ENCODE measurements at regions of chr3 and their contacts with region 1.

Region 1: GRCh38 chr3:71489315-71489761 is 94.2 kb downstream of the FOXP1 start:
- DNase-seq: peak; percentile 35
- H3K4me3 Mint-ChIP-seq: peak overlapping the region; percentile 67
- H3K27ac Mint-ChIP-seq: peak overlapping the region; percentile 88
- H3K4me1 Mint-ChIP-seq: peaks cover 88% of the 10 kb centered on the region
- H3K27me3 Mint-ChIP-seq: no peaks in the 10 kb centered on the region

Region 2: DNA sequence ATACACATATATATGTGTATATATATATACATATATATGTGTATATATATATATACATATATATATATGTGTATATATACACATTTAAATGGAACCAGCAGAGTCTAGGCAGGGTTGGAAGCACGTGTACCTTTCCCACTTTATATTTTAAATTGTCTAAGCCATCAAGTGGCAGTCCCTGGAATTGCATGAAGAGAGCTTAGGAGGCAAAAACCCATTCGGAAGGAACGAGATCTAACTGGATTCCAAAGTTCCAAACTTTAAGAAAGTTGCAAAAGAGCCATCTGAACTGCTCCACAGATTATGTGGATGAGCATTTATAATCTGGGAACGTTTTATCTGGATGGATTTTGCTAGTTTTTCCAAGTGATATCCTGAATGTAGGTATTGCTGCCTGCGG is 92.3 kb before region 1 on chr3:
- CTCF ChIA-PET with region 1: interaction called, 6 read pairs
- intact Hi-C with region 1: loop called (anchors 1 kb)
- DNase-seq: peak; percentile 35
- H3K4me3 Mint-ChIP-seq: peak overlapping the region; percentile 5
- H3K27ac Mint-ChIP-seq: no peak overlapping the region
- H3K4me1 Mint-ChIP-seq: peaks cover 81% of the 10 kb centered on the region
- H3K27me3 Mint-ChIP-seq: no peaks in the 10 kb centered on the region

Region 3: GRCh38 chr3:71456156-71456555 is 33.2 kb before region 1 on chr3:
- CTCF ChIA-PET with region 1: interaction called, 4 read pairs
- intact Hi-C with region 1: loop called (anchors 1 kb)
- DNase-seq: no peak
- H3K4me3 Mint-ChIP-seq: peak overlapping the region; percentile 77
- H3K27ac Mint-ChIP-seq: peak overlapping the region; percentile 93
- H3K4me1 Mint-ChIP-seq: peaks cover 88% of the 10 kb centered on the region
- H3K27me3 Mint-ChIP-seq: no peaks in the 10 kb centered on the region

Region 4: DNA sequence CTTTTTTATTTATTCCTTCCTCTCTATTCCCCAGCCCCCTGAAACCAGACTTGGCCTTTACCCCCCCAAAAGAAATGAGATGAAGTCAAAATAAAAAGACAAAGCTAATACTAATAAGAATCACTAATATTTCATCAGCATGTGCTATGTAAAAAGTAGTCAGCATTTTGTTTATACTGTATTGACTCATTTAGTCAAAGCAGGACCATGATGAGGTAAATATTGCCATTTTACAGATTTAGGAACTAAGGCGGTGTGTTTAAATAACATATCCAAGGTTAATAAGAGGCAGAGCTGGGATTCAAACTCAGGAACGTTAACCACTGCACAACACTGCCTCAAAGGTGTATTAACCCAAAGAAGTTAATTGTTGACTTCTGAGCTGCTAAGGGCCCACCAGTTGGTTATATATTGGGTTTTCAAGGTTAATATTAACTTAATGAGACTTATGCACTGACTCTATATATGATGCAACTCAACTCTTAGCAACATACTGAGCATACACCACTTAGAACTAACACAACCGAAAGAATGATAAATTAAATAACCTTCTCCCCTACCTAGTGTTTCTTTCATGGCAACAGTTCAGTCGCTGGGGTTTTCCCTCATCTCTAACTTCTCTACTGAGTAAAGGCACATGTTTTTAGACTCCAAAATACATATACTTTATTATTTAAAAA is 59.5 kb after region 1 on chr3:
- CTCF ChIA-PET with region 1: no interaction called
- intact Hi-C with region 1: no loop called
- DNase-seq: no peak
- H3K4me3 Mint-ChIP-seq: no peak overlapping the region
- H3K27ac Mint-ChIP-seq: no peak overlapping the region
- H3K4me1 Mint-ChIP-seq: peaks cover 7% of the 10 kb centered on the region
- H3K27me3 Mint-ChIP-seq: no peaks in the 10 kb centered on the region